Left lung (tissue), 14 donors: ENCODE measurements at regions of chr19 and their contacts with region 1.

Region 1: DNA sequence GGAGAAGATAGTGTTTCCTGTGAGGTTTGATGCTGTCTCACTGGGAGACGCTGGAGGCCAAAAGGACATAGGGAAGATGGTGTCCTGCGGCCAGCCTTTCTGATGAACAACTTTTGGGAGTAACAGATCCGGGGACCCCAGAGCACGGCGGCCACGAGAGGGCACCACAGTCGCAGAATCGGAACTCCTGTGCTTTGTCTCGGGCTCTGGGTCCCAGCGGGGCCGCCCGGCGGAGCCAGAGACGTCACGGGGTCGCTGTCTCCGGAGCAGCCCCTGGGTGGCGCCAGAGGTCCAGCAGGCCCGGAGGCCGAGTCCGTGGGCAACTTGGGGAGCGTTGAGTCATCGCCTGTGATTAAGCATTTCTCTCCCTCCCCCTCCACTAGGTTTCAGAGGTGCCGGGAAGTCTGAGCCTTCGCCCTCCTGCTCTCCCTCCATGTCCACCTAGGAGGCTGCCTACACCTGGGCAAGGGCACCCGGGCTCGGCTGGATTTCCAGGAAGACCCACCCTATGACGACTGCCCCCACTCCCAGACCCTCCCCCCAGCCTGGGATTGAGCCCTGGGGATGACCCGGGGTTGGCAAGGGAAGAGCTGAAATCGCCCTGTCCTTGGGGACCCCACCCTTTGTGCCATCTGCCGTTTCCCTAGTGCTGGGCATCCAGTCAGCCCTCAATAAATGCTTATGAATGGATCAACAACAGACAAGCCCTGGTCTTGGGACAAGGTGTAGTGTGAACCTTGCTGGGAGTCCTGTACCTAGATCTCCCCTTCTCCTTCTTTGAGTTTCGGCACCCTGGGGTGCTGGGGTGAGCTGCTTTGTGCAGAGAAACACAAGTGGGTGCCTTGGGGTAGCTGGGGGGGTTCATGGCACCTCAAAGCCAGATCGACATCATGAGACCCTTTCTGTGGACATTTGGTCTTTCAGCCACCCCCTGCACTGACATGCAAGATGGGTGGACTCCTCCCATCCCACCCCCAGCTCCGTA is 3.4 kb downstream of the NANOS3 start:
- DNase-seq: peak; percentile 90 to 100 (median 98)
- ATAC-seq: peak; percentile 99
- H3K4me3 ChIP-seq: peak overlapping the region in 1 of 2 donors; percentile 22
- H3K27ac ChIP-seq: peak overlapping the region; percentile 13 to 83
- H3K4me1 ChIP-seq: peaks cover 14 to 45% of the 10 kb centered on the region in 2 donors
- H3K27me3 ChIP-seq: no peaks in the 10 kb centered on the region
- CTCF ChIP-seq: peak; percentile 99

Region 2: DNA sequence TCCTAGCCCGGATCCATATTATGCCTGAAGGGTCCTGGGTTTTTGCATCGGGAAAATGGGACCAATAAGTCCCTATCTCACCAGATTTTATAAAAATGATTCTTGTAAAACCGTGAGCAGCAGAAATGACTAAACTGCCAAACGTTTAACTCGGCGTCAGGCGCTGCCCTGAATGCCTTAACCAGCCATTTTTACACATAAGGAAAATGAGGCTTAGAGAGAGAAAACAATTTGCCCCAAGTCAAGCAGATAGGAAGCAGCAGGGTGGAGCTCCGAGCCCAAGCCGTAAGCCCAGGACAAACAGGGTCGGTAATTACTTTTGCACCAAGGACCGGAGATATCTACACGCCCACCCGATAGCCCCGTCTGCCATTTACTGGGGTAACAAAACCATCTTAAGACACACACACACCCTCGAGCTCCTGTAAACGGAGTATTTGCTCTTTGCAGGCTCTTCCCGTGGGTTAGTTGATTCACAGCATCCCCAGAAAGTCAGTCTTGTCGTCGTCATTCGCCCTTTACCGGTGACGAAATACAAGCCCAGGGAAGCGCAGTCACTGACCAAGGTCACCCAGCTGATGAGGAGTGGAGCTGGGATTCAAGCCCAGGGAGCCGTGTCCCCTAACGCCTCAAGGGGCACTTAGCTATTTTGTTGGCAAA is 132.1 kb before region 1 on chr19:
- intact Hi-C with region 1: no loop called
- DNase-seq: no peak
- ATAC-seq: peak; percentile 2
- H3K4me3 ChIP-seq: peak overlapping the region; percentile 88 to 92
- H3K27ac ChIP-seq: peak overlapping the region; percentile 85 to 89
- H3K4me1 ChIP-seq: peaks cover 10 to 29% of the 10 kb centered on the region in 2 donors
- H3K27me3 ChIP-seq: no peaks in the 10 kb centered on the region
- CTCF ChIP-seq: no peak

Region 3: GRCh38 chr19:13817615-13818371 is 62.6 kb before region 1 on chr19:
- intact Hi-C with region 1: no loop called
- DNase-seq: peak in 3 of 4 donors; percentile 84 to 91 (median 87)
- ATAC-seq: peak; percentile 94
- H3K4me3 ChIP-seq: peak overlapping the region in 1 of 2 donors; percentile 33
- H3K27ac ChIP-seq: peak overlapping the region in 1 of 2 donors; percentile 41
- H3K4me1 ChIP-seq: peaks cover 0 to 3% of the 10 kb centered on the region in 2 donors
- H3K27me3 ChIP-seq: no peaks in the 10 kb centered on the region
- CTCF ChIP-seq: no peak

Region 4: DNA sequence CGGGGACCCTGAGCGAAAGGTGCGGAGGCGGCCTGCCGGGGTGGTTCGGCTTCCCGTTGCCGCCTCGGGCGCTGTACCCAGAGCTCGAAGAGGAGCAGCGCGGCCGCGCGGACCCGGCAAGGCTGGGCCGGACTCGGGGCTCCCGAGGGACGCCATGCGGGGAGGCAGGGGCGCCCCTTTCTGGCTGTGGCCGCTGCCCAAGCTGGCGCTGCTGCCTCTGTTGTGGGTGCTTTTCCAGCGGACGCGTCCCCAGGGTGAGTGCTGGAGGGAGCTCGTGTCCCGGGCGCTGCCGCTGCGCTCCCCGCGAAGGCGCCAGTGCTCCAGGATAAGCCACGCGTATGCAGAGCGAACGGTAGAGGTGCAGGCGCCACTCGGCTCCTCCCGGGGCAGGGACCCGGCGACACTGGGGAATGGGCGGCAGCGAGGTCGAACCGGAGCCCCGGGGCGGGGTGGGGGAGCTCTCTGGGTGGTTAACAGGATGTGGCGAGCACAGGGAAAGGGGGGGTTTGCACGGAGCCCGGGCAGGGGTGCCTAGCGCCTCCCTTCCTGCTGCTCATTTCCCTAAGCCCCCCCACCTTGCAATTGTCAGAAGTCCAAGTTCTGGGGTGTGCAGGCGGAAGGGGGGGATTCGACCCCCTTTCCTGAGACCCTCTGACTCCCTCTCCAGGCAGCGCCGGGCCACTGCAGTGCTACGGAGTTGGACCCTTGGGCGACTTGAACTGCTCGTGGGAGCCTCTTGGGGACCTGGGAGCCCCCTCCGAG is 151.5 kb after region 1 on chr19 and contains the start of gene IL27RA:
- intact Hi-C with region 1: loop called in 1 of 2 experiments (anchors 10 kb)
- DNase-seq: peak; percentile 42 to 91 (median 74)
- ATAC-seq: peak; percentile 91
- H3K4me3 ChIP-seq: peak within 1 kb of the TSS; percentile 58 to 67
- H3K27ac ChIP-seq: peak within 1 kb of the TSS; percentile 70 to 89
- H3K4me1 ChIP-seq: peaks cover 0 to 29% of the 10 kb centered on the region in 2 donors
- H3K27me3 ChIP-seq: peaks cover 0 to 21% of the 10 kb centered on the region in 2 donors
- CTCF ChIP-seq: peak; percentile 60 to 63
- polyA plus RNA-seq, gene IL27RA: 6.7 to 11.1 (median 8.0) TPM

Region 5: DNA sequence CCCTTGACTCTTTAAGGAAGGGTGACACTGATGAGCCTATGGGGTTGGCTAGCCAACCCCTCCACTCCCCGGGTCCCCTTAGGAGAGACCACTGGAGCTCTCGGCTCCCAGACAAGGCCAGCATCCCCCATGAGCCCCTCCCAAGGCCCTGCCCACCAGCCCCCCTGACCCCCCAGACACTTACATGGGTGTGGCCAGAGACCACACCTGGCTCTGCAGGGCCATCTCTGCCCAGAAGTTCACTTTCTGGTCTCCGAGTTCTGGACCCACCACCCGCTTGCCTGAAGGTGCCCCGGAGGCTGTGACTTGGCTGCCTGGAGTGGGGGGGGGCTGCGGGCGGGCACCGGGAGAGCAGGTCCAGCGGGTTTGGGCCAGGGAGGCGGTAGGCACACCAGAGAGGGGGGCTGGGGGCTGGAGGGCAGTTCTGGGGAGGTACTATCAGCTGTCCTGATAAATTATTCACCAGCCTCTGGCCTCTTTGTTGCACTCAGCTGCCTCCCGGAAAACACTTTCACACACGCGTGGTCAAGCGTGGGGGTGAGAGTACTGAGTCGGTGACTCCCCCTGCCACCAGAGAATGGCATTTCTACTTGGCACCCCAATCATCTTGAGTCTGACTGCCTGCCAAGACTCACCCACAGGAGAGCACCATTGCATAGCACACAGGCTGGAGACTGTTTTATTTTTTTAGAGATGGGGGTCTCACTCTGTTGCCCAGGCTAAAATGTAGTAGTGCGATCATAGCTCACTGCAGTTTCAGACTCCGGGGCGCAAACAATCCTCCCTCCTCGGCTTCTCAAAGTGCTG is 181.6 kb after region 1 on chr19 and contains the start of gene PALM3:
- intact Hi-C with region 1: loop called in 1 of 2 experiments (anchors 10 kb)
- DNase-seq: peak in 2 of 4 donors; percentile 59 to 73
- ATAC-seq: peak; percentile 90
- H3K4me3 ChIP-seq: peak within 1 kb of the TSS in 1 of 2 donors; percentile 33
- H3K27ac ChIP-seq: no peak within 1 kb of the TSS
- H3K4me1 ChIP-seq: peaks cover 0 to 22% of the 10 kb centered on the region in 2 donors
- H3K27me3 ChIP-seq: peaks cover 11 to 56% of the 10 kb centered on the region in 2 donors
- CTCF ChIP-seq: no peak
- polyA plus RNA-seq, gene PALM3: 12.7 to 26.6 (median 19.0) TPM

Region 6: GRCh38 chr19:14078411-14078810 is 198.1 kb after region 1 on chr19:
- intact Hi-C with region 1: loop called in 1 of 2 experiments (anchors 5 kb)
- DNase-seq: no peak
- ATAC-seq: no peak
- H3K4me3 ChIP-seq: no peak overlapping the region
- H3K27ac ChIP-seq: peak overlapping the region in 1 of 2 donors; percentile 78
- H3K4me1 ChIP-seq: peaks cover 12 to 80% of the 10 kb centered on the region in 2 donors
- H3K27me3 ChIP-seq: no peaks in the 10 kb centered on the region
- CTCF ChIP-seq: no peak